Naive thymus-derived CD4-positive, alpha-beta T cell (primary cell): ENCODE measurements at regions of chr11 and their contacts with region 1.

Region 1: DNA sequence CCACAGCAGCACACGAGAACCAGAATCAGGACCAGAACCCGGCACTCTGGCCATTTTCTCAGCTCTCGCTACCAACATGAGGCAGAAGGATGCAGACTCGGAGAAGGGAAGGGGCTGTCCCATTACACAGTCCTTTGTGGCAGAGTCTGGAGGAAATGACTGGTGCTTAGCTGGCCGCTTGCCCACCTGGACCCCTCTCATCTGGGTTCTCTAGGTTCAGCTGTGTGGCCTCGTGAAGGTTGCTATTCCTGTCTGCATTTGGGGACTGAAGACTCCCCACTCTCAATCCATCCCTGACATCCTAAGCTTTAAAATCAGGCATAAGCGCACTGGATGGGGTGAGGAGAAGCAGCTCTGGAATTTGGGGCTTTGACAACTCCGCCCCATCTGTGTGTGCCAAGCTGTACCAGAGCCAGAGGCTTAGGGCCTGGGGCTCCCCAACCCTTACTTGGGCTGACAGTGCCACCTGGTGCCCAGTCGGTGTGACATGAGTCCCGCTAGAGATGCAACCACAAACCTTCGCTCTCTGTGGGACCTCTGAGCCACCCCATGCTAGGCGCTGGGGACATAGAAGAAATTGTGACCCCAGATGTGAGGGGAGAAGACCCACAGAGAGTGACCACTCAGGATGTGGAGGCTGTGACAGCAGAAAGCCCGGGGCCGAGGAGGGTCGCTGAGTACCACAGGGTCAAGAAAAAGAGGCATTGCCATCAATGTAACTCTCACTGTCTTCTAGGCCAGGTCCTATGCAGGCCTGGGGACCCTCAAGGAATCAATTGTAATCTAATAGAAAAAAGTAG is 35.9 kb upstream of the FCHSD2 start:
- DNase-seq: peak; percentile 56 to 80 (median 76)
- ATAC-seq: peak; percentile 98
- H3K4me3 ChIP-seq: no peak overlapping the region
- H3K4me3 Mint-ChIP-seq: no peak overlapping the region
- H3K27ac ChIP-seq: no peak overlapping the region
- H3K27ac Mint-ChIP-seq: peak overlapping the region in 2 of 9 donors; percentile 14 to 42
- H3K4me1 ChIP-seq: no peaks in the 10 kb centered on the region
- H3K4me1 Mint-ChIP-seq: peaks cover 4 to 26% (median 9%) of the 10 kb centered on the region in 7 donors
- H3K27me3 ChIP-seq: peaks cover 0 to 2% of the 10 kb centered on the region in 2 donors
- H3K27me3 Mint-ChIP-seq: peaks cover 0 to 27% (median 0%) of the 10 kb centered on the region in 5 donors

Region 2: DNA sequence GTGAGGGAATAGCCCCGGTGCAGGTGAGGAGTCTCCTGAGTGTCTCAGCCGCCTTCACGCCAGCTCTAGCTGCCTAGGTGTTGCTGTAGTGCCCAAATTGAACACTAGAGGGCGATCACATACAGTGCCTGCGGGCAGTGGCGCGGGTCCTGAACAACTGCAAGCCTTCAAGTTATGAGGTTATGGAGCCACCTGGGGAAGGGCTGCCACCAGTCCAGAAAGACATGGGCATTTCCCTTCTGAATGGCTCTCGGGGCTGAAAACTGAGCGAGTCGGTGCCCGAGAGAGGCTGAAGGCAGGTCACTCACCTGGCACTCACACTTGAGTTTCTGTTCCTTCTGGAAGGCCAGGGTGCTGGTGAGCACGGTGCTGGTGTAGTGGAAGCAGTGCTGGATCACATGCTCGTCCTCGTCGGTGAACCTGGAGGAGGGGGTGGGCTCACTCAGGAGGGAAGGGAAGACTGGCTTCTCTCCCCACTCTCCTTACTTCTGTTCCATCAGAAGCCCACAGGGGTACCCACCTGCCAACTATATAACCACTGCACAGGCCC is 592.1 kb before region 1 on chr11:
- CTCF ChIA-PET with region 1: interaction called, 3 read pairs
- POLR2A ChIA-PET with region 1: no interaction called
- intact Hi-C with region 1: loop called in 1 of 2 experiments (anchors 2 kb)
- DNase-seq: peak; percentile 40 to 81 (median 61)
- ATAC-seq: peak; percentile 83
- H3K4me3 ChIP-seq: peak overlapping the region; percentile 72
- H3K4me3 Mint-ChIP-seq: peak overlapping the region; percentile 64 to 94 (median 90)
- H3K27ac ChIP-seq: no peak overlapping the region
- H3K27ac Mint-ChIP-seq: peak overlapping the region in 3 of 9 donors; percentile 20 to 68 (median 57)
- H3K4me1 ChIP-seq: peaks cover 15 to 22% of the 10 kb centered on the region in 2 donors
- H3K4me1 Mint-ChIP-seq: peaks cover 26 to 37% (median 36%) of the 10 kb centered on the region in 7 donors
- H3K27me3 ChIP-seq: peaks cover 0 to 3% of the 10 kb centered on the region in 2 donors
- H3K27me3 Mint-ChIP-seq: peaks cover 20 to 59% (median 35%) of the 10 kb centered on the region in 5 donors

Region 3: DNA sequence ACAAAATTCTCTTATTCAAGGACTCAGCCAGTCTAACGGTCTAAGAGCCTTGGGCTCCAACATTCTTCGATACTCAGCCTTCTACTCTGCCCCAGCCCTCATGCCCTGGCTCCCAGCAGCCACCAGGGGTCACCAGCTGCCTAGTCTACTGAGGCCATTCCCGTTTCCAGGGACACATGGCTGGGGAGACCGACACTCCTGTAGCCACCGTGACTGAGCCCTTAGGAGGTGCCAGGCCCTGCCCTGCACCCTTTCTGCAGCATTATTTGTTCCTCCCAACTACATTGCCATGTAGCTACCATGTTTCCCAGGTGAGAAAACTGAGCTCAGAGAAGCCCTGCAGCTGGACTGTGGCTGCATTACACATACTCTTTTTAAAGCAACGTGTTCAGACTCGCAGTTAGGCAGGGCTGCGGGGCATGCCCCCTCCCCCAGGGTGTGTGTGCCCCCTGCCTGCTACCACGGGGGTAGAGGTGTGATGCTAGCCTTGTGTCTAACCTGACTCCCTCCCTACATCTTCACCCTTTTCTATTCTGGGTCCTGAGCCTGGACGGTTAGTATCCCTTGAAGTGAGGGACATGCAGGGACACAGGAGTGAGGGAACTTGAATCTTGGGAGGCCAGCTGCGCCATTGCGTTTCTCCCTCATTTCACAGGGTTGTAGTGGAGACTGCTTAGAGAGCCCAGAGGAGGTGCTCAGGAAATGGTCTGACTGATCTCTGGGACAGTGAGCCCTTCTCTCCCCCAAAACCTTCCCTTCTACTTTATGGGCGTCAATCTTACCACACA is 346.3 kb before region 1 on chr11:
- CTCF ChIA-PET with region 1: interaction called, 89 read pairs
- POLR2A ChIA-PET with region 1: interaction called, 8 read pairs
- intact Hi-C with region 1: loop called (anchors 1 kb)
- DNase-seq: peak in 7 of 9 donors; percentile 31 to 57 (median 45)
- ATAC-seq: peak; percentile 79
- H3K4me3 ChIP-seq: no peak overlapping the region
- H3K4me3 Mint-ChIP-seq: no peak overlapping the region
- H3K27ac ChIP-seq: peak overlapping the region; percentile 22
- H3K27ac Mint-ChIP-seq: peak overlapping the region in 8 of 9 donors; percentile 52 to 86 (median 80)
- H3K4me1 ChIP-seq: peaks cover 0 to 4% of the 10 kb centered on the region in 2 donors
- H3K4me1 Mint-ChIP-seq: peaks cover 5 to 37% (median 13%) of the 10 kb centered on the region in 7 donors
- H3K27me3 ChIP-seq: no peaks in the 10 kb centered on the region
- H3K27me3 Mint-ChIP-seq: no peaks in the 10 kb centered on the region

Region 4: DNA sequence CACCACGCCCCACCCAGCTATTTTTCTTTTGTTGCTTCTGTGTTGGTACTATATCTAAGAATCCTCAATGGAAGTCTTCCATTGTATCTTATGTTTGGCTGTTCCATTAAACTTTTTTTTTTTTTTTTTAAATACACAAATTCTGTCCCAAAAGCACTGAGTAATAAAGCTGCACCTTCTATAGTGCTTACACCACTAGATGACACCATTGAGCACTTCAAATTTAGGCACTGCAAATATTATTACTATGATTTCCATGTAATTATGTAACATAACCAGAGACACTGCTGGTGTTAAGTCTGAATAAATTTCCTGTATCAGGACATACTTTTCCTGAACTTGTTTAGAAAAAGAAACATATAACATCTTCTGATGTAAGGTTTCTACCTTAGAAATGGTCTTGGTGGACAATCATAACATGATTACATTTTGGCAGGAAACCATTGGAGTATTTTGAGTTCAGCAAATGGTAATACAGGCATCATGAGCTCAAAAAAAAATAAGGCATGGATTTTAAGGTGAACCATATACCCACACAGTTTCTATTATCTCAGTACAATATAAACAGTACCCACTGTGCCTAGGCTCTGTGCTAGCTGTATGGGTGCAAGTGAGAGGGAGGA is 253.3 kb before region 1 on chr11:
- CTCF ChIA-PET with region 1: interaction called, 75 read pairs
- POLR2A ChIA-PET with region 1: interaction called, 4 read pairs
- intact Hi-C with region 1: loop called in 1 of 2 experiments (anchors 1 kb)
- DNase-seq: peak in 5 of 9 donors; percentile 18 to 49 (median 41)
- ATAC-seq: peak; percentile 61
- H3K4me3 ChIP-seq: no peak overlapping the region
- H3K4me3 Mint-ChIP-seq: no peak overlapping the region
- H3K27ac ChIP-seq: no peak overlapping the region
- H3K27ac Mint-ChIP-seq: peak overlapping the region in 5 of 9 donors; percentile 20 to 65 (median 34)
- H3K4me1 ChIP-seq: no peaks in the 10 kb centered on the region
- H3K4me1 Mint-ChIP-seq: peaks cover 4 to 18% (median 12%) of the 10 kb centered on the region in 7 donors
- H3K27me3 ChIP-seq: no peaks in the 10 kb centered on the region
- H3K27me3 Mint-ChIP-seq: no peaks in the 10 kb centered on the region

Region 5: DNA sequence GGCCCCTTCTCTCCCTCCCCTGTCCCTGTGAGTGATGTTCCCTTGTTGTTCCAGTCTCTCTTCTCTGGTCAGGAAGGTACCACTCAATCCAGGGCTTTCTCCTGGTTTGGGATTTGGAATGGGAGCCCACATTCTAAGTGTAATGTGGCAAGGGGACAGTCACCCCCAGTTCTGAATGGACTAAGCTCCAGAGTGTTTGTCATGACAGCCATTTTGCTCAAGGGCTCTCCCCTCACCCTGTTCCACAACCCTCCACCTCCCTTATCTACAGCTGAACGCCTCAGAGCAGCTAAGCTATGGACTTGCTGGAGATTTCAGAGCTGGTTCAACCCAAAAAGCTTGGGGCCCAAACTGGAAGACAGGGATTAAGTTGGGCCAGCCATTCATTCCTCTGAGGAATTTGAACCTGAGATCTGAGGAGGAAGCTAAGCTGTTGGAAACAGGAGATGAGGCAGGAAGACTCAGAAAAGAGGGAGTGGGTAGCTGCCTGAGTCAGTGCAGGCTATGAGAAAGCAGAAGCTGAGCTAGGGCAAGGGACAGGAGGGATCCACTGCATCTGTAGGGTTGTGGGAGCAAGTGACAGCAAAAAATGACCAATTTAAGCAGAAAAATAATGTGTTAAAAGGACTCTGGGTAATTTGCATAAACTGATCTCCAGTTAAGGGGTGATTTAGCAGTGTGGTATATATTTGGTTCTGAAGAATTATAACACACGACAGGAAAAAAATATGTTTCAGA is 13.0 kb before region 1 on chr11:
- CTCF ChIA-PET with region 1: interaction called, 18 read pairs
- POLR2A ChIA-PET with region 1: no interaction called
- intact Hi-C with region 1: no loop called
- DNase-seq: no peak
- ATAC-seq: no peak
- H3K4me3 ChIP-seq: no peak overlapping the region
- H3K4me3 Mint-ChIP-seq: no peak overlapping the region
- H3K27ac ChIP-seq: no peak overlapping the region
- H3K27ac Mint-ChIP-seq: no peak overlapping the region
- H3K4me1 ChIP-seq: no peaks in the 10 kb centered on the region
- H3K4me1 Mint-ChIP-seq: peaks cover 0 to 9% (median 0%) of the 10 kb centered on the region in 7 donors
- H3K27me3 ChIP-seq: no peaks in the 10 kb centered on the region
- H3K27me3 Mint-ChIP-seq: peaks cover 0 to 5% (median 3%) of the 10 kb centered on the region in 5 donors

Region 6: DNA sequence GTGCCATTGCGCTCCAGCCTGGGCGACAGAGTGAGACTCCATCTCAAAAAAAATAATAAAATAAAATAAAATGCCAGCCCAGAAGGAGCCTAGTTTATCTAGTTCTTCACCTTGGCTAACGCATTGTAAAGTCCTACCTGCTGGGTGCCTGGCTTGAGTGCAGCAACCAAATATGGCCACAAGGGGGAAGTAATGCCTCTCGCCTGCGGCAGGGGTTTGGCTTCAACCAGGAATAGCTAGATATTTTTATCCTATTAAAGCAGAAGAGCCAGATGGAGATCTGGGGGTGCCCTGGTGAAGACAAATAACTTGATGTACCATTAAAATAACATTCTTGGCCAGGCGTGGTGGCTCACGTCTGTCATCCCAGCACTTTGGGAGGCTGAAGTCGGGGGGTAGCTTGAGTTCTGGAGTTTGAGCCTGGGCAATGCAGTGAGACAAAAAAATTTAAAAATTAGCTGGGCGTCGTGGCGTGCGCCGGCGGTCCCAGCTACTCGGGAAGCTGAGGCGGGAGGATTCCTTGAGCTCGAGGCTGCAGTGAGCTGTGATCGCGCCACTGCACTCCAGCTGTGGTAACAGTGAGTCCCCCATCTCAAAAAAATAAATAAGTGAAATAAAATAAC is 447.8 kb after region 1 on chr11:
- CTCF ChIA-PET with region 1: no interaction called
- POLR2A ChIA-PET with region 1: no interaction called
- intact Hi-C with region 1: no loop called
- DNase-seq: peak; percentile 38 to 75 (median 66)
- ATAC-seq: peak; percentile 88
- H3K4me3 ChIP-seq: no peak overlapping the region
- H3K4me3 Mint-ChIP-seq: peak overlapping the region in 1 of 10 donors; percentile 68
- H3K27ac ChIP-seq: no peak overlapping the region
- H3K27ac Mint-ChIP-seq: peak overlapping the region in 1 of 9 donors; percentile 59
- H3K4me1 ChIP-seq: peaks cover 0 to 3% of the 10 kb centered on the region in 2 donors
- H3K4me1 Mint-ChIP-seq: peaks cover 0 to 15% (median 0%) of the 10 kb centered on the region in 7 donors
- H3K27me3 ChIP-seq: no peaks in the 10 kb centered on the region
- H3K27me3 Mint-ChIP-seq: peaks cover 13 to 29% (median 27%) of the 10 kb centered on the region in 5 donors